B cell (primary cell): ENCODE measurements at regions of chr7 and their contacts with region 1.

Region 1: DNA sequence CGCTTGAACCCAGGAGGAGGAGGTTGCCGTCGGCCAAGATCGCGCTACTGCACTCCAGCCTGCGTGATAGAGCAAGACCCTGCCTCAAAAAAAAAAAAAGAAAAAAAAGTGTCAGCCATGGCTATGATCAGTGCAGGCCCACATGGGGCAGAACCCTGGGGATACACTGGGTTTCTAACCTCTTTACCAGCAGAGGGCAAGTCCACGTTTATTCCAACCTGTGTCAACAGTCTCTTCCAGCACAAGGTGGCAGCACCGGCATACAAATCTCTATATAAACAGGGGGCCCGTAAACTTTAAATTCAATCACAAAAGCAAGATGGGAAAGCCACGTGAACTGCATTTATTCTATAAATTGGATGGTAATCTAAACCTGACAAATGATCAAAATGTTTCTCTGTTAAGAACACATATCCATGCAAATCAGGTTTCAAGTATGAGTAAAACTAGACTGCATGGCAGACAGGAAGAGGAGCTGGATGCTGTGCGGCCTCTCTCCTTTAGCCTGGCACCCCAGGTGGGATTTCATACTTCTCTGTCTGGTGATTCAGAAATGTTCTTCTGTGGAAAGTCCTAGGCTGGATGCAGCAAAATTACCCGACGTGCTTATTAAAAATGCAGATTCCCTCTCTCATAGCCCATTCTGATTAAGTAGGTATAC is 60.0 kb upstream of the STEAP1B start:
- DNase-seq: peak; percentile 88
- ATAC-seq: peak; percentile 90
- H3K4me3 ChIP-seq: no peak overlapping the region
- H3K4me3 Mint-ChIP-seq: peak overlapping the region; percentile 51
- H3K27ac ChIP-seq: no peak overlapping the region
- H3K27ac Mint-ChIP-seq: peak overlapping the region; percentile 26
- H3K4me1 ChIP-seq: peaks cover 39 to 47% of the 10 kb centered on the region in 2 donors
- H3K4me1 Mint-ChIP-seq: peaks cover 41% of the 10 kb centered on the region
- H3K27me3 ChIP-seq: no peaks in the 10 kb centered on the region
- H3K27me3 Mint-ChIP-seq: no peaks in the 10 kb centered on the region
- CTCF ChIP-seq: peak; percentile 95

Region 2: GRCh38 chr7:22499044-22499443 is 60.9 kb before region 1 on chr7:
- CTCF ChIA-PET with region 1: no interaction called
- POLR2A ChIA-PET with region 1: no interaction called
- intact Hi-C with region 1: no loop called
- DNase-seq: no peak
- ATAC-seq: no peak
- H3K4me3 ChIP-seq: no peak overlapping the region
- H3K4me3 Mint-ChIP-seq: no peak overlapping the region
- H3K27ac ChIP-seq: no peak overlapping the region
- H3K27ac Mint-ChIP-seq: no peak overlapping the region
- H3K4me1 ChIP-seq: peaks cover 0 to 6% of the 10 kb centered on the region in 2 donors
- H3K4me1 Mint-ChIP-seq: peaks cover 6% of the 10 kb centered on the region
- H3K27me3 ChIP-seq: peaks cover 0 to 4% (median 2%) of the 10 kb centered on the region in 4 experiments
- H3K27me3 Mint-ChIP-seq: peaks cover 8% of the 10 kb centered on the region
- CTCF ChIP-seq: no peak

Region 3: DNA sequence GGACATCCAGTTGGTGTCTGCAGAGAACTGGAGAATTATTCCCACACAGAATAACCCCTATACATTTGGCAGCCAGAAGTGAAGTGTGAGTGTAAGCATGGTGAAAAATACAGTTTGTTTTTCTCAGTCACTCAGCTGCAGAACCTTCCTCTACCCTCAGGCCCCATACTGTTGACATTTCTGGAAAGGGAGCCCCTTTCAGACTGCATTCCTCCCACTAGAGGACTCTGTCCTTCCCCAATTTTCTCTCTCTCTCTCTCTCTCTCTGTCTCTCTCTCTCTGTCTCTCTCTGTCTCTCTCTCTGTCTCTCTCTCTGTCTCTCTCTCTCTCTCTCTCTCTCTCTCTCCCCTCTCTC is 26.8 kb after region 1 on chr7:
- CTCF ChIA-PET with region 1: interaction called, 48 read pairs
- POLR2A ChIA-PET with region 1: no interaction called
- intact Hi-C with region 1: no loop called
- DNase-seq: no peak
- ATAC-seq: no peak
- H3K4me3 ChIP-seq: no peak overlapping the region
- H3K4me3 Mint-ChIP-seq: no peak overlapping the region
- H3K27ac ChIP-seq: peak overlapping the region in 1 of 2 donors; percentile 1
- H3K27ac Mint-ChIP-seq: no peak overlapping the region
- H3K4me1 ChIP-seq: peaks cover 47 to 50% of the 10 kb centered on the region in 2 donors
- H3K4me1 Mint-ChIP-seq: peaks cover 54% of the 10 kb centered on the region
- H3K27me3 ChIP-seq: no peaks in the 10 kb centered on the region
- H3K27me3 Mint-ChIP-seq: no peaks in the 10 kb centered on the region
- CTCF ChIP-seq: no peak

Region 4: GRCh38 chr7:22712999-22713398 is 153.0 kb after region 1 on chr7:
- CTCF ChIA-PET with region 1: interaction called, 712 read pairs
- POLR2A ChIA-PET with region 1: no interaction called
- intact Hi-C with region 1: no loop called
- DNase-seq: peak; percentile 79
- ATAC-seq: peak; percentile 84
- H3K4me3 ChIP-seq: peak overlapping the region in 1 of 5 experiments; percentile 3
- H3K4me3 Mint-ChIP-seq: peak overlapping the region; percentile 75
- H3K27ac ChIP-seq: peak overlapping the region; percentile 96 to 97
- H3K27ac Mint-ChIP-seq: peak overlapping the region; percentile 93
- H3K4me1 ChIP-seq: peaks cover 43 to 51% of the 10 kb centered on the region in 2 donors
- H3K4me1 Mint-ChIP-seq: peaks cover 61% of the 10 kb centered on the region
- H3K27me3 ChIP-seq: no peaks in the 10 kb centered on the region
- H3K27me3 Mint-ChIP-seq: no peaks in the 10 kb centered on the region
- CTCF ChIP-seq: no peak

Region 5: DNA sequence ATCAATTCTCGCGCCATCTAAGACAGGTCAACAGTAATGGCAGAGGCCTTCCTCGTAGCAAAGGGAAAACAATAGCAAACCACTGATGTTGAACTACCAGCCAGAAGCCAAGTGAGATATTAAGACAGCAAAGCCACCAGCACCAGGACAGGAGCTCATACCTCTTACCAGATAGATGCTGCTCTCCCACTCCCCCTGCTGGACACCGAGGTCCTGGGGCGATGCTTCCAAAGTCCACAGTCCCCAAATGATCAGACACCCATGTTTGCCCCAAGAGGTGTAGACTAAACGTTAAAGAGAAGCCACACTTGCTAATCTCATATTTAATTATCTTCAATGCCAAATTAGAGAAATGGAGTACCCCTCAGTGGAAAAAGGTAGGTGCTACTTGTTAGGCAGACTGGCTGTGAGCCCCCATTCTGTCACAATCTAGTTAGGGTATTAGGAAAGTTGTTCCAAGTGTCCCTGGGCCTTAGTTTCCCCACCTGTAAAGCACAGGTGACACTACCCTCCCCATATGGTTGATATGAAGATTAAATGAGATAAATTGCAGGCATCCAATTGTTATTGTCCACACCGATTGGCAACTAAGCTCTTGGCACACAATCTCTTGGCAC is 222.8 kb after region 1 on chr7:
- CTCF ChIA-PET with region 1: interaction called, 268 read pairs
- POLR2A ChIA-PET with region 1: no interaction called
- intact Hi-C with region 1: loop called (anchors 1 kb)
- DNase-seq: peak; percentile 84
- ATAC-seq: peak; percentile 96
- H3K4me3 ChIP-seq: no peak overlapping the region
- H3K4me3 Mint-ChIP-seq: no peak overlapping the region
- H3K27ac ChIP-seq: no peak overlapping the region
- H3K27ac Mint-ChIP-seq: no peak overlapping the region
- H3K4me1 ChIP-seq: no peaks in the 10 kb centered on the region
- H3K4me1 Mint-ChIP-seq: peaks cover 3% of the 10 kb centered on the region
- H3K27me3 ChIP-seq: no peaks in the 10 kb centered on the region
- H3K27me3 Mint-ChIP-seq: no peaks in the 10 kb centered on the region
- CTCF ChIP-seq: peak; percentile 87

Region 6: DNA sequence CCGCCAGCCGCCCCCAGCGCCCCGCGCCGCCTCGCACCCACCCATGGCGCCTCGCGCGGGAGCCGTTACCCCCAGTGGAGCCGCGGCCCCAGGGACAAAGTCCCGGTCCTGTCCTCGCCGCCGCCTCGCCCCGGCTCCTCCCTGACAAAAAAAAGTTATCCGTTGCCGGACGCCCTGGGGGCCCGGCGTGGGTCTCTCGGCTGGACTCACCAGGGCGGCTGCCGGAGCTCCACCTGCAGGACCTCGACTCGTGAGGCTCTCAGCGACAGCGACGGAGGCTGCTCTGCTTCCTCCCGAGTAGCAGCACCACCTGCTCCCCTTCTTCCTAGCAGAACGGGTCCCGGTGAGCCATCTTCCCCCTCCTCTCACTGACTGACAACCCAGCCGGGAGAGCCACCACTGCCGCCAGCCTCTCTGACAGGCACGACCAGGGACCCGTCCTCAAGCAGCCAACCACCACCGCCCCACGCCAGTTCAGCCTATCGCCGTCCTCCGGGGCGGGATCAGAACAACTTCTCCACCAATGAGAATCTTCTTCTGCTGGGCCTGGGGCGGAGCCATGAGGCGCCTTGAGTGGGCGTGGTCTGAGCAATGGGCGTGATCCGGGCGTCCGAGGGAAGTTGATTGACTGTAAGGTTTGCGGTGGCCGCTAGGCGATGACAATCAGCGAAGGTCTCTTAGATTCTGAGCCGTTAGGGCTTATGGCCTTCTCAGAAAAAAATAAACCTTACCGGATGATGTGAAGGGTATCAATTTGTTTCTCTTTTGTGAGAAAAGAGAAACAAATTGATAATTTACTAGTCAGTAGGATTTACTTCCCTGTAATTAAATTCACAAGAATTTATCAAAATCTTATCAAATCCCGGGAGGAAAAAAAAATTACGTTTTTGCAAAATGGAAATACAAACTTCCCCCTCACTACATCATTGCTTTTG is 454.0 kb after region 1 on chr7 and contains the start of gene HYCC1:
- CTCF ChIA-PET with region 1: interaction called, 5 read pairs
- POLR2A ChIA-PET with region 1: no interaction called
- intact Hi-C with region 1: loop called (anchors 1 kb)
- DNase-seq: peak; percentile 99
- ATAC-seq: peak; percentile 96
- H3K4me3 ChIP-seq: peak within 1 kb of the TSS; percentile 68 to 85 (median 80)
- H3K4me3 Mint-ChIP-seq: peak within 1 kb of the TSS; percentile 99
- H3K27ac ChIP-seq: peak within 1 kb of the TSS; percentile 63 to 70
- H3K27ac Mint-ChIP-seq: peak within 1 kb of the TSS; percentile 98
- H3K4me1 ChIP-seq: peaks cover 73 to 74% of the 10 kb centered on the region in 2 donors
- H3K4me1 Mint-ChIP-seq: peaks cover 42% of the 10 kb centered on the region
- H3K27me3 ChIP-seq: no peaks in the 10 kb centered on the region
- H3K27me3 Mint-ChIP-seq: no peaks in the 10 kb centered on the region
- CTCF ChIP-seq: peak; percentile 72
- total RNA-seq, gene HYCC1: 39.6 and 40.8 TPM in 2 replicates

Region 7: DNA sequence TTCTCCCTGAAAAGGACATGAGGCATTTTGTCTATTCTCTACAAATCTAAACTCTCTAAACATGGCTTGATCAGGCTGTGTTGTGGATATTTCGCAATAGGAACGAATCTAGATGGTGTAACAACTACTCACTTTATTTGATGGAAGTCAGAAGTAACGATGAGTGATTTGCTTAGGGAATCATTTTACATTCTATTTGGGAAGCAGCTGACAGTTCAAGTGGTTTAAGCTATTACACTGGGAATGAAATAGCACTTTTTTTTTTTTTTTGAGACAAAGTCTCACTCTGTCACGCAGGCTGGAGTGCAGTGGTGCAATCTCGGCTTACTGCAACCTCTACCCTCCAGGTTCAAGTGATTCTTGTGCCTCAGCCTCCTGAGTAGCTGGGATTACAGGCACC is 1768.1 kb after region 1 on chr7:
- CTCF ChIA-PET with region 1: no interaction called
- POLR2A ChIA-PET with region 1: no interaction called
- intact Hi-C with region 1: no loop called
- DNase-seq: no peak
- ATAC-seq: no peak
- H3K4me3 ChIP-seq: no peak overlapping the region
- H3K4me3 Mint-ChIP-seq: no peak overlapping the region
- H3K27ac ChIP-seq: no peak overlapping the region
- H3K27ac Mint-ChIP-seq: no peak overlapping the region
- H3K4me1 ChIP-seq: peaks cover 7 to 21% of the 10 kb centered on the region in 2 donors
- H3K4me1 Mint-ChIP-seq: peaks cover 25% of the 10 kb centered on the region
- H3K27me3 ChIP-seq: no peaks in the 10 kb centered on the region
- H3K27me3 Mint-ChIP-seq: peaks cover 12% of the 10 kb centered on the region
- CTCF ChIP-seq: no peak